Tibial artery (tissue), 4 donors: ENCODE measurements at regions of chr1 and their contacts with region 1.

Region 1: DNA sequence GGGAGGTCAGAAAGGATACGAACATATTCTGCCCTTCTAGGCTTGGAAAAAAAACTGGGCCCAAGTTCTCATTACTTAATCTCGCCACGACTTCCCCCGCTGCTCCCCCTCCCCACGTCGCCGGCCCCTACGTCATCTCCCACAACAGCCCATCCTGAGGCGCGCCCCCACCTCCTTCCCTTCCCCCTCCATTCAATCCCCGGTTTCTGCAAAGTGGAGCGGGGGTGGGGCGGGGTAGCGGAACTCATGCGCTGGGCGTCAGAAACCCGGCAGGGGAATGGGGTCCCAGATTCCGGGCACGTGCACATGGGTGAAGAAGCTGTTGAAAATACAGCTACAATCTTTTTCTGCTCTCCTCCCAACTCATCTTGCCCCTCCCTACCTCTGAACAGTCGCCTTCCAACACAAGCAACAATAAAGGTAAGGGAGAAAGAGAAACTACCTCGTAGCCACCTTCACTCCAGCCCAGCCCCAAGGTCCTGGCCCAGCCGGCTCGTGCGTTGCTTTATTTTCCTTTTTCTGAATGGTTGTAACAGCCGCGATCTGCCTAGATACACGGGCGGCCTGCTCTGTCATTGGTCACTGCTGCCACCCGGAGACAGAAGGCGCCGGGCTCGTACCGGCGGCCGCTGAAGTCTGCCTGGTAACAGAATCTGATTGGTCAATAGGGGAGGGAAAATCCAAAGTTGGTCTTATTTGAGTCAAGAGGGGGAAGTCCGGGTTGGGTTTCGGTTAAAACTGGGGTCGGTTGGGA is at the start of gene RFX5:
- DNase-seq: peak; percentile 97
- H3K4me3 ChIP-seq: peak within 1 kb of the TSS; percentile 68 to 77
- H3K27ac ChIP-seq: peak within 1 kb of the TSS; percentile 83 to 89
- H3K4me1 ChIP-seq: peaks cover 3 to 18% (median 10%) of the 10 kb centered on the region in 4 donors
- H3K27me3 ChIP-seq: no peaks in the 10 kb centered on the region
- CTCF ChIP-seq: no peak

Region 2: DNA sequence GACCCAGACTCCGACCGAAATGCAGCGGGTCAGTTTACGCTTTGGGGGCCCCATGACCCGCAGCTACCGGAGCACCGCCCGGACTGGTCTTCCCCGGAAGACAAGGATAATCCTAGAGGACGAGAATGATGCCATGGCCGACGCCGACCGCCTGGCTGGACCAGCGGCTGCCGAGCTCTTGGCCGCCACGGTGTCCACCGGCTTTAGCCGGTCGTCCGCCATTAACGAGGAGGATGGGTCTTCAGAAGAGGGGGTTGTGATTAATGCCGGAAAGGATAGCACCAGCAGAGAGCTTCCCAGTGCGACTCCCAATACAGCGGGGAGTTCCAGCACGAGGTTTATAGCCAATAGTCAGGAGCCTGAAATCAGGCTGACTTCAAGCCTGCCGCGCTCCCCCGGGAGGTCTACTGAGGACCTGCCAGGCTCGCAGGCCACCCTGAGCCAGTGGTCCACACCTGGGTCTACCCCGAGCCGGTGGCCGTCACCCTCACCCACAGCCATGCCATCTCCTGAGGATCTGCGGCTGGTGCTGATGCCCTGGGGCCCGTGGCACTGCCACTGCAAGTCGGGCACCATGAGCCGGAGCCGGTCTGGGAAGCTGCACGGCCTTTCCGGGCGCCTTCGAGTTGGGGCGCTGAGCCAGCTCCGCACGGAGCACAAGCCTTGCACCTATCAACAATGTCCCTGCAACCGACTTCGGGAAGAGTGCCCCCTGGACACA is 298.9 kb before region 1 on chr1:
- intact Hi-C with region 1: no loop called
- DNase-seq: peak; percentile 76 to 87
- H3K4me3 ChIP-seq: peak overlapping the region; percentile 63 to 82
- H3K27ac ChIP-seq: peak overlapping the region; percentile 85 to 98
- H3K4me1 ChIP-seq: peaks cover 0 to 23% (median 13%) of the 10 kb centered on the region in 4 donors
- H3K27me3 ChIP-seq: no peaks in the 10 kb centered on the region
- CTCF ChIP-seq: peak; percentile 43 to 44

Region 3: GRCh38 chr1:151198255-151199127 is 148.5 kb before region 1 on chr1 and contains the start of gene PIP5K1A:
- intact Hi-C with region 1: loop called (anchors 10 kb)
- DNase-seq: peak; percentile 99
- H3K4me3 ChIP-seq: peak within 1 kb of the TSS; percentile 82 to 85
- H3K27ac ChIP-seq: peak within 1 kb of the TSS; percentile 89 to 91
- H3K4me1 ChIP-seq: peaks cover 0 to 53% (median 34%) of the 10 kb centered on the region in 4 donors
- H3K27me3 ChIP-seq: no peaks in the 10 kb centered on the region
- CTCF ChIP-seq: no peak

Region 4: DNA sequence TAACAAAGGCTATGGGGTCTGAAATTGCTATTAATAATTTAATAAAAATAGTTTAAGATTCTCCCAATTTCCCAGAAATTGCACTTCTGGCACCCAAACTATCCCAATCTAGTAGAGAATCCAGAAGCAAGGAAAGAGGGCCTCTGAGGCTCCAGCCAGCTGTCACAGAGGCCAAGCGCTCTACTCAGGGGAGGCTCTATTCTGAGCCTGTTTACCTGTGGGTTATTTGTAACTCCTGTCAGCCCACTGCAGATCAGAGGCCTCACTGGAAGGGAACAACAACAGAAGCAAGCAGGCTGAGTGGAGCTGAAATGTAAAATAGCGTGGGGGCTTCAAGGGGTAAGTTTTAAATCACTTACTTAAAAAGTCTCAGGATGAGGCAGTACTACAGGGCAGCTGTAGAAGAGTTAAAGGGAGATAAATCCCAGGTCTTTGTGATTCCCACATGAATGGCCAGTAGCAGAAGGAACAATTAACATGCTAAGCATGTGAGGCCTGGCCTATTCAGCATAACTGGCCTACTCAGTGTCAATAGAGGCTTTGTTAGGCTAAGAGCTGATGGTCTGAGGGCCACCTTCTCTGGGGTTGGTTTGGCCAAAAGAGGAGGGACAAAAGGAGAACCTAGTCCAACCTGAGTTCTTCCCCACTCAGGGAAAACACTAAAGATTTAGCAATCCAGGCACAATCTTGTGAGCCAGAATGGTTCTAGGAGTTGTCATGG is 52.0 kb before region 1 on chr1:
- intact Hi-C with region 1: loop called (anchors 2 kb)
- DNase-seq: no peak
- H3K4me3 ChIP-seq: no peak overlapping the region
- H3K27ac ChIP-seq: no peak overlapping the region
- H3K4me1 ChIP-seq: peaks cover 0 to under 1% (median 0%) of the 10 kb centered on the region in 4 donors
- H3K27me3 ChIP-seq: no peaks in the 10 kb centered on the region
- CTCF ChIP-seq: no peak

Region 5: GRCh38 chr1:151399890-151400495 is 53.0 kb after region 1 on chr1:
- intact Hi-C with region 1: loop called (anchors 10 kb)
- DNase-seq: no peak
- H3K4me3 ChIP-seq: peak overlapping the region; percentile 83 to 93
- H3K27ac ChIP-seq: peak overlapping the region; percentile 91
- H3K4me1 ChIP-seq: peaks cover 0 to 18% (median 15%) of the 10 kb centered on the region in 4 donors
- H3K27me3 ChIP-seq: no peaks in the 10 kb centered on the region
- CTCF ChIP-seq: no peak

Region 6: DNA sequence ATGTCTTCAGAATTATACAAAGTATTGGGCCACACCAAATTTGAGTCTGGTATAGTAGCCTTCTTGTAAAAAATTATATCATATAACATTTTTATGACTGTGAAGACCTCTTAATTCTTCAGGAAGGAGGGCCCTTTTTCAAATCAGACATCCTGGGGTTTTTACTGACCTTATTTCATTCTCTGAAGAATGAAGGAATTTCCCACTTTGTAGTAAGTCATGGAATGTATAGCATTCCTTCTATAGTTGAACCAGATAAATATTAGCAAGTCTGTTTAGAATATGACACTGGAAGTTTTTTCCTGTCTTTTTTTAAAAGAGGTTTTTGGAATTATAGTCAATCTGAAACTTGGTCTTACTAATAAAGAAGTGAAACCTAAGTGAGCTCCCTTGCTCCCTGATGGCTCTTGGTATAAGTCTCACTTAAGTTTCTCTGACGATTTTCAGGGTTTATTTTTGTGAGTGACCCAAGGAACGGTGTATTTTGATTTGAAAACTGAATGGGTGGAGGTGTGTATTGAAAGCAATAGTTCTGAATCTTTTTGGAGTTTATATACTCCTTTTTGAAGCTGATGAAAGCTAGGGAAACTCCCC is 288.6 kb after region 1 on chr1:
- intact Hi-C with region 1: no loop called
- DNase-seq: no peak
- H3K4me3 ChIP-seq: no peak overlapping the region
- H3K27ac ChIP-seq: no peak overlapping the region
- H3K4me1 ChIP-seq: peaks cover 0 to 30% (median 12%) of the 10 kb centered on the region in 4 donors
- H3K27me3 ChIP-seq: no peaks in the 10 kb centered on the region
- CTCF ChIP-seq: no peak